H1 (cell line): ENCODE measurements at regions of chr13 and their contacts with region 1.

Region 1: DNA sequence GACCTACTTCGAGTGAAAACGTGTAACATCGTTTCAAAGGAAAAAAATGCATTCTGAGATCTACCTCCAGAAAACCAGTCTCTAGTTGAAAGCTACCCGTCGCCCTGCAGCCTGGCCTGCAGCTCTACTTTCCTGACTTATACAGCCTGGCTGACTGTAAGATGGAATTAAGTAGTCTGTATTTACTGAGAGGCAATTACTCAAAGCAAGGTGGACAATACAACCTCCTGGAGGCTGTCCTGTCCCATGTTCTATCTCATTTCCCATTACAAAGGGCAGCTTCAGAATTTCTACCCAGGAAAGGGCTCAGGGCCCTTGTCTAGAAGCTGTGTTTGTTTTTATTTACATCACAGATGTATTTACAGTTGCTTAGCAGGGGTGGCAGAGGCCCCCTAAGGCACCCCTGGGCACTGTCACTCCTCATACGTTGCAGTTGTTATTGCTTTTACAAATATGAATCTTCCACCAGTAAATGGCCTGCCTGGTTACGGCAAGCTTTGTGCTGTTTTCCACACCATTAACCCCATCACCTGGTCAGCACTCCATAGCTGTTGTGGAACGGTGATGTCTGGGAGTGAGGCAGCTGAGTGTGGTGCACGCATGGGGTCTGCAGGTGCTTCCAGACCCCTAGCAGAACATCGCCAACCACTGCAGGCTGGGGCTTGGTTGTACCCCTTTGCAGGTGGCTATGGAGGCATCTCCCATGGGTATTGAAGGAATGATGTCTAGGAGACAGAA is 46.3 kb upstream of the MTIF3 start:
- DNase-seq: no peak
- H3K4me3 ChIP-seq: no peak overlapping the region
- H3K27ac ChIP-seq: no peak overlapping the region
- H3K4me1 ChIP-seq: 0 out of 7 replicates have a peak, but pooled peaks cover 0 to 1% (median 0%) of the 10 kb centered on the region in 4 experiments
- H3K27me3 ChIP-seq: no peaks in the 10 kb centered on the region
- CTCF ChIP-seq: no peak
- EP300 ChIP-seq: no peak
- POLR2A ChIP-seq: no peak
- RAD21 ChIP-seq: no peak

Region 2: GRCh38 chr13:27374650-27375049 is 122.1 kb before region 1 on chr13:
- CTCF ChIA-PET with region 1: interaction called, 13 read pairs
- POLR2A ChIA-PET with region 1: no interaction called
- DNase-seq: no peak
- H3K4me3 ChIP-seq: no peak overlapping the region
- H3K27ac ChIP-seq: no peak overlapping the region
- H3K4me1 ChIP-seq: peaks cover 0 to 5% (median 3%) of the 10 kb centered on the region in 4 experiments; a peak in 2 of 7 replicates
- H3K27me3 ChIP-seq: peaks cover 0 to 3% (median 1%) of the 10 kb centered on the region in 4 experiments; a peak in 2 of 7 replicates
- CTCF ChIP-seq: peak; percentile 46 to 85 (median 82)
- EP300 ChIP-seq: no peak
- POLR2A ChIP-seq: no peak
- RAD21 ChIP-seq: peak; percentile 87 to 88